ENCODE measurements at regions of chr15 and their contacts with region 1.

Region 1: GRCh38 chr15:41904541-41905005 is 10.7 kb upstream of the SPTBN5 start:
- DNase-seq: peak in 2 of 3 donors; percentile 59 to 68
- ATAC-seq: peak; percentile 81 to 92 (median 85)
- H3K4me3 ChIP-seq: no peak overlapping the region
- H3K27ac ChIP-seq: no peak overlapping the region
- H3K4me1 ChIP-seq: peaks cover 0 to 5% (median 0%) of the 10 kb centered on the region in 4 donors
- H3K27me3 ChIP-seq: no peaks in the 10 kb centered on the region
- CTCF ChIP-seq: peak; percentile 78 to 86 (median 82)
- POLR2A ChIP-seq: no peak

Region 2: DNA sequence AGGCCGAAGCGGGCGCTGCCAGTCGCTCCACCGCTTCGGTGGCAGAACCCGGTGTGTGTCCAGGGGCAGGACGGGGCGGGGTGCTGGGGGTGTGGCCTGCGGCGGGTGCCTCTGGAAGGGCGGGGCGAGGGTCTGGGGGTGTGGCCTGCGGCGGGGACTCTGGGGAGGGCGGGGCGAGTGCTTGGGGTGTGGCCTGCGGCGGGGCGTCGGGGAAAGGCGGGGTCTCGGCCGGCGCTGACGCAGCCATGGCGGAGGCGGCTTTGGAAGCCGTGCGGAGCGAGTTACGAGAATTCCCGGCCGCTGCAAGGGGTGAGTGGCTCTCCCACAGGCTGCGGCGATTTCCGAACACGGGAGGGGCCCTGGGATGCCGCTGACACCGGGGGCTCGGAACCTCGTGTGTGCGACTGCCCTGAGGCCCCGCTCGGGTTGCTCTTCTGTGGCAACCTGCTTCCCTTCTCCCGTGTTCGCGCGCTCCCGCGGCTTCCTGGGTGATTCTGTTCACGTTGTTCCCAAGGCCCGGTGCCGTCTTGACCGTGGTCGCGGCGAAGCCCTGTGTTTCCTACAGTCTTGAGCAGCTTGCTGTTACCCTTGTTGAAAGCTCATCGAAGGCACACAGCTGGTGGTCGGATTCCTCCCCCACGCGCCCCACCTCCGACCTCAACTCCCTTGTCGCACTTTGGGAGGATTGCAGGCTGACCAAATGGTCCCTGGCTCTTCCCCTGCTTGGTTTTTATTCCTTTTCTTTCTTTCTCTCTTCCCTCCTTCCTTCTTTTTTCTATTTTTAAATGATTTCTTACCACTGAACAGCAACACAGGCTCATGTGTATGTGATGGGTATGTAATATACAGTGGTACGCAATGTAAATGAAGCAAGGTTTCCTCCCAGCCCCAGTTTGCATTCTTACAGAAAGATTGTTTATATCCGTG is 76.4 kb before region 1 on chr15 and contains the start of gene JMJD7:
- intact Hi-C with region 1: loop called in 1 of 2 experiments (anchors 10 kb)
- DNase-seq: peak; percentile 99
- ATAC-seq: peak; percentile 96 to 98 (median 98)
- H3K4me3 ChIP-seq: peak within 1 kb of the TSS; percentile 83 to 91 (median 85)
- H3K27ac ChIP-seq: peak within 1 kb of the TSS; percentile 58 to 73 (median 67)
- H3K4me1 ChIP-seq: peaks cover 0 to 14% (median 6%) of the 10 kb centered on the region in 4 donors
- H3K27me3 ChIP-seq: no peaks in the 10 kb centered on the region
- CTCF ChIP-seq: no peak
- POLR2A ChIP-seq: peak; percentile 85
- total RNA-seq, gene JMJD7: 6.0 to 8.6 (median 7.3) TPM

Region 3: DNA sequence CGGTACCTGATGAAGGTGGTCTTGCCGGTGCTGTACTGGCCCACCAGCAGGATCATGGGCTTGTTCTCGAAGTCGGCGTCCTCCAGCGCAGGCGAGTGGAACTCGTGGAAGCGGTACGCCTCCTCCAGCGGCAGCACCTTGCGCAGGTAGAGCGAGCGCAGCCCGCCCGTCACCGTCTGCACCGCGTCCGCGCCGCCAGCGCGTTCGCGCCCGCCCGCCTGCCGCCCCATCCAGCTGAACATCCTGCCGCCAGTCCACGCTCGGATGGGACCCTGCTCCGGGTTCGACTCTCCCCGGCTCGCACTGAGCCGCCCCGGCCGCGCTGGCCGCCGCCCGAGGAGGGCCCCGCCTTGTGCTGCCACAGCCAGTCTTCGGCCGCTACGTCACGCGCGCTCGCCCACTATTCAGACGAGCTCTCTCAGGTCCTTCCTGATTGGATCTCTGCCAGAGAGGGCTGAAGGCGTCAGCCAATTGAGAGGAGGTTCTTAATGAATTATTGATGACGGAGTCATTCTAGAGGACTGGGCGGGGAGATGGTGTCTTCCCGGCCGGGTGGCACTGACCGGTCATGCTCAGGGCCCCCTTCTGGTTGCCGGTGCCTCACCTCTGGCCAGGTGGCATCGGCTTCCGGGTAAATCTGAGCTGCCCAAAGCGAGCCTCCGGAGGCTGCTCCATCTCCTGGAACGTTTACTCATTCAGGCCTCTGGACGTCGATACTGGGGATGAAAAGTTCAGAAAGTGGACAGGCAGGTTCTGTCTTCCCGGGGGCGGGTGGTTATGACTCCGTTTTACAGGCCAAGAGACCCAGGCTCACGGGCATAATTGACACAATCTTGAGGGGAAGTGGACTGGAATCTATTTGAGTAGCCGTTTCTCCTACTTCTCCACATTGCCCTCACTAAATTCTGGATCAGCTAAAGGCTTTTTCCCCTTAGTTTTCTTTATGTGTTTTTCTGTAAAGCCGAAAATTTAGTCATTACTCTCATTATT is 68.0 kb after region 1 on chr15 and contains the start of gene EHD4:
- intact Hi-C with region 1: no loop called
- DNase-seq: peak; percentile 99 to 100 (median 99)
- ATAC-seq: peak; percentile 85 to 96 (median 94)
- H3K4me3 ChIP-seq: peak within 1 kb of the TSS; percentile 93 to 99 (median 94)
- H3K27ac ChIP-seq: peak within 1 kb of the TSS; percentile 87 to 96 (median 88)
- H3K4me1 ChIP-seq: peaks cover 0 to 14% (median 3%) of the 10 kb centered on the region in 4 donors
- H3K27me3 ChIP-seq: no peaks in the 10 kb centered on the region
- CTCF ChIP-seq: peak; percentile 31 to 50 (median 44)
- POLR2A ChIP-seq: peak; percentile 96
- total RNA-seq, gene EHD4: 4.7 to 21.5 (median 11.1) TPM

Region 4: DNA sequence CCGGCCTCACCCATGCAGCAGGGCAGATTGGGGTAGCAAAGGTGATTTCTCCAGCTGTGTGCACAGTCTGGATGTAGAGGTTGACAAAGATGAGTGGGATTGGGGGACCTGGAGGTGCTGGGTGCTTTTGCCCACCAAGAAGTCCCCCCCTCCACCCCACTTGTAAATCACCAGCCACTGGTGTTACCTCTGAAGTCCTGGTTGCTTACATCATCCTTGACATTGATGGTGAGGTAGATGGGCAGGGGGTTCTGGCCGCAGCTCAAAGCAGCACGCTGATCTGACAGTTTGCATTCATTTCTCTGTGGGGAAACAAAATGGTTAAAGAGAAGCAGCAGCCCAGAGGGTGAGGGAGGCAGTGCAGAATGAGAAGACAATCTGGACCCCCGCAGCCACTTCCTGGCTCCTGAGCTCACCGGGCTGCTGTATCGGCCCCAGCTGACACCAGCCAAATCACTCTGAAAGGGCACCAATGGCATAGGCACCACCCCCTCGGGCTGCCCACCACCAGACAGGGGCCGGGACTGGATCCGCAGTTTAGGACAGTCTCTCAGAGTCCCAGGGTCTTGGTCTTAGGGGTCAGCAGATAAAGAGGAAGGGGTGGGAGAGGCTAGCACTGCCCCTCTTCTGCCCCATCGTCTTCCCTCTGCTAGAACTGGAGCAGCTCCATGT is 85.5 kb after region 1 on chr15:
- intact Hi-C with region 1: no loop called
- DNase-seq: peak in 1 of 3 donors; percentile 44
- ATAC-seq: no peak
- H3K4me3 ChIP-seq: no peak overlapping the region
- H3K27ac ChIP-seq: no peak overlapping the region
- H3K4me1 ChIP-seq: no peaks in the 10 kb centered on the region
- H3K27me3 ChIP-seq: no peaks in the 10 kb centered on the region
- CTCF ChIP-seq: no peak
- POLR2A ChIP-seq: no peak